CD4-positive, alpha-beta memory T cell (primary cell): ENCODE measurements at regions of chr12 and their contacts with region 1.

Region 1: GRCh38 chr12:122244565-122245371 is 18.9 kb upstream of the DIABLO start:
- DNase-seq: peak; percentile 64 to 76 (median 74)
- H3K4me3 ChIP-seq: peak overlapping the region; percentile 63 to 92
- H3K4me3 Mint-ChIP-seq: peak overlapping the region; percentile 90 to 95 (median 93)
- H3K27ac ChIP-seq: peak overlapping the region; percentile 67
- H3K27ac Mint-ChIP-seq: peak overlapping the region; percentile 94 to 97 (median 95)
- H3K4me1 ChIP-seq: peaks cover 46% of the 10 kb centered on the region
- H3K4me1 Mint-ChIP-seq: peaks cover 25 to 50% (median 38%) of the 10 kb centered on the region in 4 donors
- H3K27me3 ChIP-seq: no peaks in the 10 kb centered on the region
- H3K27me3 Mint-ChIP-seq: no peaks in the 10 kb centered on the region

Region 2: DNA sequence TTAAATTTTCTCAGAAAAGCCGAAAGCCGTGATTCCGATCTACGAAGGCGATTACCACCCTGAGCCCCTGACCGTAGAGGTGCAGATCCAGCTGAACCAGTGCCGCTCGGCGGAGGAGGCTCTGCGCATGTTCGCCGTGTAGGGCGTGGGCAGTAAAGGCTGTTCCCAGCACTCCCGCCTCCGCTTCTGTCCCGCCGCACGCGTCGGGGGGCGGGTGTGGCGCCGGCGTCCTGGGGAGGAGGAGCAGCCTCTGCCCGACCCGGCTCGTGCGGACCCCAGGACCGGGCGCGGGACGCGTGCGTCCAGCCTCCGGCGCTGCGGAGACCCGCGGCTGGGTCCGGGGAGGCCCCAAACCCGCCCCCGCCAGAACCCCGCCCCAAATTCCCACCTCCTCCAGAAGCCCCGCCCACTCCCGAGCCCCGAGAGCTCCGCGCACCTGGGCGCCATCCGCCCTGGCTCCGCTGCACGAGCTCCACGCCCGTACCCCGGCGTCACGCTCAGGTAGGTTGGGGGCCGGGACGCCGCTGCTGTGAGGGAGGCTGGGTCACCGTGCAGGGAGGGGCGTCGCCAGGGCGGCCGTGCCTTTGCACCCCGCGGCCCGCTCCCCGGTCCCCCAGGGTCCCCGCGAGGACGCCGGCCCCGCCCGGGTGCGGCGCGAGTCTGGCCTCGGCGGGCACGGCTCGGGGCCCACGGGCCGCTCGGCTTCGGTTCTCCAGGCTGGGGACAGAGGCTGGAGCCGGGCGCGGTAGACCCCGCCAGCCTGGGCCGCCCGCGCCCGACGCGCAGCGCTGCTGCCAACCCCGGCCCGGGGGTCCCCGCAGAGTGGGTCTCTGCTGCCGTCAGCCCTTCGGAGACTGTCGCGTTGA is 41.2 kb before region 1 on chr12 and contains the start of gene B3GNT4:
- CTCF ChIA-PET with region 1: interaction called, 3 read pairs
- POLR2A ChIA-PET with region 1: interaction called, 7 read pairs
- intact Hi-C with region 1: loop called (anchors 1 kb)
- DNase-seq: peak; percentile 68 to 74 (median 71)
- H3K4me3 ChIP-seq: peak within 1 kb of the TSS in 1 of 2 donors; percentile 55
- H3K4me3 Mint-ChIP-seq: peak within 1 kb of the TSS; percentile 80 to 94 (median 84)
- H3K27ac ChIP-seq: no peak within 1 kb of the TSS
- H3K27ac Mint-ChIP-seq: peak within 1 kb of the TSS in 5 of 7 donors; percentile 19 to 82 (median 24)
- H3K4me1 ChIP-seq: peaks cover 9% of the 10 kb centered on the region
- H3K4me1 Mint-ChIP-seq: peaks cover 5 to 20% (median 12%) of the 10 kb centered on the region in 4 donors
- H3K27me3 ChIP-seq: no peaks in the 10 kb centered on the region
- H3K27me3 Mint-ChIP-seq: peaks cover 0 to 8% of the 10 kb centered on the region in 2 donors
- total RNA-seq, gene B3GNT4: 0.93 to 1.4 TPM

Region 3: DNA sequence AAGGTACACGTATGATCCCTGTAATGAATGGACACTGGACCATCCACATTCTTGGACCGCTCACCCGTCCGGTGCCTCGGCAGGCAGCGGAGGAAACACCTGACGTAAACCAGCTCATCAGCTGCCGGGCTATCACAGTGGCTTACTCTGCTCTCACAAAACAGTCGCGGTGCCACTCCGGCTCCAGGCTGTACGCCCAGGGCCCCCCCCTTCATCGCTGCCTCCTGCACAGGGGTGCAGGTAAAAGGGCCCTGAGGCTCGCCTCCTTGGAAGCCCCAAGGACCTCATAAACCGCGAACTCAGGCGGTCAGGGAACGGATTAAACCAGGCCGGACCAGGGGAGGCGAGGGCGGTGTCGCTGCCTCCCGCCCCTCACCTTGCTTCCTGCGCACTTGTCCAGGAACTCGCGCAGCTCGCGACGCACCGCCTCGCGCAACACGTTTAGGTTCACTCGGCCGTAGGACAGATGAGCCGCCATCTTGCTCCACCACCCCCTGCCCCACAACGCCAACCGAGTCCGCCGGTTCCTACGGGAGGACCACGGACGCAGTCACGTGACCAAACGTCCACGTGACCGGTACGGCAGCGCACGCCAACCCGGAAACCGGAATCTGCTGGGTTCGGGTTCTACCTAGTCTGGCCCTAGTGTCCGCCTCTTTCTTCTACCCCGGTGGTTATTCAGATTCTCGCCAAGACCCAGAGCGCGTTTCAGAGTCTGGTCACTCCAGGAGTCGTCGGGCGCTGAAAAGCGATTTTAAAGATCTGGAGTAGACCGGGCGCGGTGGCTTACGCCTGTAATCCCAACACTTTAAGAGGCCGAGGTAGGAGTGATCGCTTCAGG is 21.4 kb after region 1 on chr12 and contains the start of gene VPS33A:
- CTCF ChIA-PET with region 1: interaction called, 35 read pairs
- POLR2A ChIA-PET with region 1: interaction called, 128 read pairs
- intact Hi-C with region 1: loop called (anchors 1 kb)
- DNase-seq: peak; percentile 88 to 93 (median 91)
- H3K4me3 ChIP-seq: peak within 1 kb of the TSS; percentile 70 to 99
- H3K4me3 Mint-ChIP-seq: peak within 1 kb of the TSS; percentile 96 to 99 (median 98)
- H3K27ac ChIP-seq: peak within 1 kb of the TSS; percentile 81
- H3K27ac Mint-ChIP-seq: peak within 1 kb of the TSS; percentile 99 to 100 (median 99)
- H3K4me1 ChIP-seq: peaks cover 23% of the 10 kb centered on the region
- H3K4me1 Mint-ChIP-seq: peaks cover 14 to 39% (median 25%) of the 10 kb centered on the region in 4 donors
- H3K27me3 ChIP-seq: no peaks in the 10 kb centered on the region
- H3K27me3 Mint-ChIP-seq: peaks cover 0 to 4% of the 10 kb centered on the region in 2 donors
- total RNA-seq, gene VPS33A: 40.5 to 42.6 TPM

Region 4: GRCh38 chr12:122602456-122602855 is 357.7 kb after region 1 on chr12:
- CTCF ChIA-PET with region 1: no interaction called
- POLR2A ChIA-PET with region 1: no interaction called
- intact Hi-C with region 1: no loop called
- DNase-seq: no peak
- H3K4me3 ChIP-seq: no peak overlapping the region
- H3K4me3 Mint-ChIP-seq: no peak overlapping the region
- H3K27ac ChIP-seq: no peak overlapping the region
- H3K27ac Mint-ChIP-seq: no peak overlapping the region
- H3K4me1 ChIP-seq: no peaks in the 10 kb centered on the region
- H3K4me1 Mint-ChIP-seq: peaks cover 0 to 4% (median 1%) of the 10 kb centered on the region in 4 donors
- H3K27me3 ChIP-seq: no peaks in the 10 kb centered on the region
- H3K27me3 Mint-ChIP-seq: no peaks in the 10 kb centered on the region